HEK293 (cell line): ENCODE measurements at regions of chr5 and their contacts with region 1.

Region 1: GRCh38 chr5:151651997-151652645 is 34.6 kb downstream of the SPARC start:
- H3K4me3 ChIP-seq: no peak overlapping the region
- H3K27ac ChIP-seq: no peak overlapping the region
- H3K4me1 ChIP-seq: no peaks in the 10 kb centered on the region
- CTCF ChIP-seq: peak; percentile 83

Region 2: DNA sequence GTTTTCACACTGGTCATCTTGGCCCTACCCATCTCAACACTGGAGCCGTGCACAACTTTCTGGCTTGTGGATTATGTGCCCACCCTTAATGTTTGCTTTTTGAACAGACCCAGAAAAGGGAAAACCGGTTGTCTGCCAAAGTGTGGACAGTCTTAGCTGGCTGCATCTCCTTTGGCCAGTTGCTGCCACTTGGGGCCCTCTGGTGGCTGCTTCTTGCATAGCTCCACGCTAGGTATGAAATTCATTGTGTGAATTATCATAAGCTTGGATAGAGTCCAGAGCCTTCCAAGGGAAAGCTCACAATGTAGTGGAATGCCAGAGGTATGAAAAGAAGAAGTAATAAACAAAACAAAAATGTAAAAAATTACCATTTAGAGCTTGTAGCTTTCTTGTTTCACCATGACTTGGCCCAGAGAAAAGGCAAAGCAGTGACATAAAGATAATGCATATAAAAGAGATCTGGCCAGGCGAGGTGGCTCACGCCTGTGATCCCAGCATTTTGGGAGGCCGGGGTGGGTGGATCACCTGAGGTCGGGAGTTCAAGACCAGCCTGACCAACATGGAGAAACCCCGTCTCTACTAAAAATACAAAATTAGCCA is 336.0 kb before region 1 on chr5:
- CTCF ChIA-PET with region 1: interaction called, 14 read pairs
- POLR2A ChIA-PET with region 1: no interaction called
- H3K4me3 ChIP-seq: no peak overlapping the region
- H3K27ac ChIP-seq: no peak overlapping the region
- H3K4me1 ChIP-seq: 0 out of 2 replicates have a peak, but pooled peaks cover 6% of the 10 kb centered on the region
- CTCF ChIP-seq: peak; percentile 56

Region 3: GRCh38 chr5:151417712-151418111 is 234.4 kb before region 1 on chr5:
- CTCF ChIA-PET with region 1: no interaction called
- POLR2A ChIA-PET with region 1: no interaction called
- H3K4me3 ChIP-seq: no peak overlapping the region
- H3K27ac ChIP-seq: no peak overlapping the region
- H3K4me1 ChIP-seq: no peaks in the 10 kb centered on the region
- CTCF ChIP-seq: no peak

Region 4: DNA sequence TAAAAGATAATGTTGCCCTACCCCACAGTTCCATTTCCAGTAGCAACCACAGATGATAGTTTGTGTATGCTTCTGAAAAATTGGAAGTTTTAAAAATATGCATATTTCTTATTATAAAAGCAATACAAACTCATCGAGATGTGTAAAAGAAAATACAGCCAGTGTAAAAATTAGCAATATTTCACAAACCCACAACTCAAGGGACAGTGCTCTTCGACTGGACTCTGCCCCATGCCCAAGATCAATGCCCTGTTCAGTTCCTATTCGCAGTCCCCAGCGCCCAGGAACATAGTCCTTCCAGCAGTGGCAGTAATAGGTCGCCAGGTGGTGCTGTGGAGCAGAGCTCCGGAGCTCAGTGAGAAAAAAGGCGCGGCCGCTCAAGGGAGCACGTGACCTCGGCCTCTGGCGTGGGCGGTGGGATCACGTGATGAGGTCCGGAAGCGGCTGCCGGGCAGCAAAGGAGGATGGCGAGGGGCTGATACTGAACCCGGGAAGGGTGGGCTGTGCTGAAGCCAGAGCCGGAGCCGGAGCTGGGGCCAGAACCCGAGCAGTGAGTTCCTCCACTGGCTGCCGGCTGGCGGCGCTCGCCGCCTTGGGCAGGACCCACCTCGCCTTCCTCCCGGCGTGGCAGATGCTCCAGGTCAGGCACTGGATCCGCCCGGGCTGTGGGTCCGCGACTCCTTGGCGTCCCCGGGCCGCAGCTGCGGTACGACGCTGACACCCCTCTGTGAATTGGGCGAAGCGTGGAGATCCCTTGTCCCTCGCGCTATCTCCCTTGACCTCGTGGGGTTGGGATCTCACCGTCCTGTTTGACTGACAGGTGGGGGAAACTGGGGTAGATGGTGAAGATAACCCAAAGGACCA is 204.7 kb before region 1 on chr5 and contains the start of gene SLC36A1:
- CTCF ChIA-PET with region 1: interaction called, 66 read pairs
- POLR2A ChIA-PET with region 1: interaction called, 12 read pairs
- H3K4me3 ChIP-seq: peak within 1 kb of the TSS; percentile 63
- H3K27ac ChIP-seq: no peak within 1 kb of the TSS
- H3K4me1 ChIP-seq: peaks cover 5% of the 10 kb centered on the region
- CTCF ChIP-seq: peak; percentile 91

Region 5: GRCh38 chr5:151523335-151523734 is 128.8 kb before region 1 on chr5:
- CTCF ChIA-PET with region 1: interaction called, 36 read pairs
- POLR2A ChIA-PET with region 1: no interaction called
- H3K4me3 ChIP-seq: no peak overlapping the region
- H3K27ac ChIP-seq: no peak overlapping the region
- H3K4me1 ChIP-seq: no peaks in the 10 kb centered on the region
- CTCF ChIP-seq: peak; percentile 57; the same call in 1 of the 2 replicates

Region 6: DNA sequence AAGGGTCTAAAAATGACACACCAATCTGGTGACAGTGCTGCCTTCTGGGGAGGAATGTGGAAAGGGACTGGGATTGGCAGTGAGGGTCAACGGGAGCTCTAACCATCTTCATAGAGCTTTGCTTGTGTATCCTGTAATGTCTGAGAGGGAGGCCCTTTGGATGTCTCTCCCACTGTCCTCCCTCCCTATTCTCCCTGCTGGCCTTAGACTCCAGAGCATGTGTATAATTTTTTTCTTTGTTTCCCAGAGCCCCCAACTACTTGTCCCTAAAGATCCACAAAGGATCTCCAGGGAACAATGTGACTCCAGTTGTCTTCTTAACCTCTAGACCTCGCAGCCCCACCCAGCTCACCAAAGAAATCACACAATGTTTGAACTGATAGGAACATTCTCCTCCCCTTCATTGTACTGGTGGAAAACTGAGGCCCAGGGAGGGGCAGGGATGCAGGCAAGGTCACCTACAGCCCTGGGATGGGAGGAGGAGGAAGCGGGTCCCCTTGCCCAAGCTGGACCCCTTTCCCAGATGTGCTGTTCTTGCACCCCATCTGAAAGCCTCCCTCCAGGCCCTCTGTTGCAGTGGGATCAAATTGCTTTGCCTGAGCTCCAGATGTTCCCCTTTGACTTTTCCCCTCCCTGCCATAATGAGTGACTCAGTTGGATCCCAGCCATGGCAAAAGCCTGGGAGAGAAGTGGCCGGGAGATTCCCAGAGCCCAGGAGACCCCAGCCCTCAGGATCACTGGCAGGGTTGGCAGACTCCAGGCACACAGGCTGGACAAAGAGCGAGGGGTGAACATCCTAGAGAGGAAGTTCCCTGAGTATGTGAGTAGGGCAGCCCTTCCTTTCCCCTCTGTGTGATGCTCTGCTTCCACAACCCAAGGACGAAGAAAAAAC is 12.8 kb after region 1 on chr5:
- CTCF ChIA-PET with region 1: interaction called, 14 read pairs
- POLR2A ChIA-PET with region 1: no interaction called
- H3K4me3 ChIP-seq: no peak overlapping the region
- H3K27ac ChIP-seq: no peak overlapping the region
- H3K4me1 ChIP-seq: peaks cover 3% of the 10 kb centered on the region; the same call in 1 of the 2 replicates
- CTCF ChIP-seq: no peak

Region 7: DNA sequence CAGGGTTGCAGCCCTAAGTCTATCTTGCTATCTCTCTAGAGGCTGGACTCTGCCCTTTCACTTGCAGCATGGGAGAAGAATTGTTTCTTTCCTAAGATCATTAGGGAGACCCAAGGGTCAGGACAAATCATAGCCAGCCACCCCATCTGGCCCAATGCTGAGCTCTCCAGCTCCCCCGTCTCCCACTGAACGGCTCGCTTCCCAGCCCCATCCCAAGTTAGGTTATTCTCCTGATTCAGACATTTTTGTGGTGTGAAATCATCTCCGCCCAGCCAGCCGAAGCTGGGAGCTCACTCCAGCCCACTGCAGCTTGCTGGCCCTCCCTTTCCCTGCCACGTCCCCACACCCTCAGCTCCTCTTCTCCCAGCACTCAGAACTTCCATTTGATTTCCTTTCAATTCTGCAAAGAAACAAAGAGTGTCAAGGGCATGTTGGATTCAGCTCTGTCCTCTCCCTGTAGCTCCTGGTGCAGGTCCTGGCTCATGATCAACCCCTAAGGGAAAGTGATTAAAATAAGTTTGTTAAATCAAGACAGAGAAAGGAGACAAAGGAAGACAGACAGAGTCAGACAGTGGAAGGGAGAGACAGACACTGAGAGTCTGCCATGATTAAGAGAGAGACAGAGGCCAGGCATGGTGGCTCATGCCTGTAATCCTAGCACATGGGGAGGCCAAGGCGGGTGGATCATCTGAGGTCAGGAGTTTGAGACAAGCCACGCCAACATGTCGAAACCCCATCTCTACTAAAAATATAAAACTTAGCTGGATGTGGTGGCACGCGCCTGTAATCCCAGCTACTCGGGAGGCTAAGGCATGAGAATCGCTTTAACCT is 47.2 kb after region 1 on chr5:
- CTCF ChIA-PET with region 1: interaction called, 11 read pairs
- POLR2A ChIA-PET with region 1: no interaction called
- H3K4me3 ChIP-seq: no peak overlapping the region
- H3K27ac ChIP-seq: 0 out of 2 replicates have a peak overlapping the region, but pooled peaks have one; percentile 24
- H3K4me1 ChIP-seq: no peaks in the 10 kb centered on the region
- CTCF ChIP-seq: no peak

Region 8: GRCh38 chr5:151740336-151740942 is 88.3 kb after region 1 on chr5:
- CTCF ChIA-PET with region 1: interaction called, 180 read pairs
- POLR2A ChIA-PET with region 1: interaction called, 3 read pairs
- H3K4me3 ChIP-seq: no peak overlapping the region
- H3K27ac ChIP-seq: no peak overlapping the region
- H3K4me1 ChIP-seq: peaks cover 2% of the 10 kb centered on the region; the same call in 1 of the 2 replicates
- CTCF ChIP-seq: peak; percentile 57; the same call in 1 of the 2 replicates